HCT116 (cell line): ENCODE measurements at regions of chr3 and their contacts with region 1.

Region 1: GRCh38 chr3:185558395-185558794 is 6.0 kb upstream of the LIPH start:
- DNase-seq: peak; percentile 84
- ATAC-seq: peak; percentile 74
- H3K4me3 ChIP-seq: peak overlapping the region in 1 of 2 experiments; percentile 45; a peak in 3 of 4 replicates
- H3K27ac ChIP-seq: peak overlapping the region; percentile 56
- H3K4me1 ChIP-seq: peaks cover 24 to 45% of the 10 kb centered on the region in 2 experiments; a peak in 3 of 4 replicates
- H3K27me3 ChIP-seq: no peaks in the 10 kb centered on the region
- CTCF ChIP-seq: no peak
- POLR2A ChIP-seq: peak; percentile 32
- RAD21 ChIP-seq: no peak

Region 2: DNA sequence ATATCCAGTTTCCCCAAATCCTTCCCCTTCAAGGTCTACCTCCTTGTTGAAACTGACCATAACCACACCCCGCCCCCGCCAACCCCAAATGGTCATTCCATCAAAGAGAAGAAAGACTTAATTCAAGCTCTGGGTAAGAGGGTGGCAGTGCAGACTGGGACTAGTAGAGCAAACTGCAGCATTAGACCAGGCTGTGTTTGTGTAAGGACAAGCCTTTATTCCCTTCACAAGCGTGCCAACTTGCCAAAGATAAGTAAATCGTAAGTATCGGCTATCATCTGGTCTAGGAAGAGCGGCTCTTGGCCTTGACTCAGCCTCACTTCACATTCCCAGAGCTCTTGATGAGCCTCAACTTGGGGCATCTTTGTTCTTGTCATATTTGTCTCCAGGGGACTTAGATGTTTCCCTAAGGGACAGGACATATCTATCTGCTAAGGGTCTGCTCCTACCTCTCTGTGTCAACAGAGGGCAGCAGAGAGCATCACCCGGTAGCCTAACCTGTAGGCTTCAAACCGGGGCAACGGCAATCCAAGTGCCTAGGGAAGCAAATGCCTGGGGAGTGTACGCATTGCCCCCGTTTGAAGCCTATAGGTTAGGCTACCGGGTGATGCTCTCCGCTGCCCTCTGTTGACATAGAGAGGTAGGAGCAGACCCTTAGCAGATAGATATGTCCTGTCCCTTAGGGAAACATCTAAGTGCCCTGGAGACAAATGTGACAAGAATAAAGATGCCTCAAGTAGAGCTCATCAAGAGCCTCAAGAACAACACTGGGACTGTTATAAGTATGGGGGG is 204.4 kb before region 1 on chr3:
- CTCF ChIA-PET with region 1: no interaction called
- POLR2A ChIA-PET with region 1: no interaction called
- RAD21 ChIA-PET with region 1: no interaction called
- intact Hi-C with region 1: loop called (anchors 5 kb)
- DNase-seq: peak; percentile 92
- ATAC-seq: peak; percentile 99
- H3K4me3 ChIP-seq: no peak overlapping the region
- H3K27ac ChIP-seq: no peak overlapping the region
- H3K4me1 ChIP-seq: peaks cover 0 to 17% of the 10 kb centered on the region in 2 experiments; a peak in 2 of 4 replicates
- H3K27me3 ChIP-seq: no peaks in the 10 kb centered on the region
- CTCF ChIP-seq: peak; percentile 63 to 88 (median 68); a peak in 5 of 6 replicates
- POLR2A ChIP-seq: no peak
- RAD21 ChIP-seq: peak; percentile 60

Region 3: GRCh38 chr3:185460719-185461350 is 97.6 kb before region 1 on chr3:
- CTCF ChIA-PET with region 1: interaction called, 38 read pairs
- POLR2A ChIA-PET with region 1: interaction called, 13 read pairs
- RAD21 ChIA-PET with region 1: interaction called, 9 read pairs
- intact Hi-C with region 1: no loop called
- DNase-seq: peak; percentile 32
- ATAC-seq: peak; percentile 75
- H3K4me3 ChIP-seq: no peak overlapping the region
- H3K27ac ChIP-seq: no peak overlapping the region
- H3K4me1 ChIP-seq: no peaks in the 10 kb centered on the region
- H3K27me3 ChIP-seq: no peaks in the 10 kb centered on the region
- CTCF ChIP-seq: peak; percentile 46 to 86 (median 66); a peak in 5 of 6 replicates
- POLR2A ChIP-seq: no peak
- RAD21 ChIP-seq: peak; percentile 83

Region 4: DNA sequence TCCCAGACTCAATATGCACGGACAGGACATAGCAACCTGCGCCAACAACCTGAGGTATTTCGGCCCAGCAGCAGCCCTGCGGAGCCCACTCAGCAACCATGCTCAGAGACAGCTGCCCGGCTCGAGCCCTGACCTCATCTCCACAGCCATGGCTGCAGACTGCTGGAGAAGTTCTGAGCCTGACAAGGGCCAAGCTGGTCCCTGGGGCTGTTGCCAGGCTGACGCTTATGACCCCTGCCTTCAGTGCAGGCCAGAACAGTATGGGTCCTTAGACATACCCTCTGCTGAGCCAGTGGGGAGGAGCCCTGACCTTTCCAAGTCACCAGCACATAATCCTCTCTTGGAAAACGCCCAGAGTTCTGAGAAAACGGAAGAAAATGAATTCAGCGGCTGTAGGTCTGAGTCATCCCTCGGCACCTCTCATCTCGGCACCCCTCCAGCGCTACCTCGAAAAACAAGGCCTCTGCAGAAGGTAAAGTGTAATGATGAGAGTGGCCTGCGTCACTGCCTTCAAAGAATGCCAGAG is 85.0 kb before region 1 on chr3:
- CTCF ChIA-PET with region 1: interaction called, 3 read pairs
- POLR2A ChIA-PET with region 1: no interaction called
- RAD21 ChIA-PET with region 1: no interaction called
- intact Hi-C with region 1: loop called (anchors 5 kb)
- DNase-seq: peak; percentile 93
- ATAC-seq: peak; percentile 91
- H3K4me3 ChIP-seq: peak overlapping the region in 1 of 2 experiments; percentile 33; a peak in 1 of 4 replicates
- H3K27ac ChIP-seq: peak overlapping the region; percentile 56
- H3K4me1 ChIP-seq: peaks cover 42 to 57% of the 10 kb centered on the region in 2 experiments
- H3K27me3 ChIP-seq: no peaks in the 10 kb centered on the region
- CTCF ChIP-seq: no peak
- POLR2A ChIP-seq: no peak
- RAD21 ChIP-seq: peak; percentile 28; the same call in 1 of the 2 replicates

Region 5: GRCh38 chr3:185498503-185499396 is 59.6 kb before region 1 on chr3 and contains the start of gene TMEM41A:
- CTCF ChIA-PET with region 1: interaction called, 5 read pairs
- POLR2A ChIA-PET with region 1: no interaction called
- RAD21 ChIA-PET with region 1: no interaction called
- intact Hi-C with region 1: loop called (anchors 1 kb)
- DNase-seq: peak; percentile 73
- ATAC-seq: peak; percentile 97
- H3K4me3 ChIP-seq: peak within 1 kb of the TSS; percentile 92 to 95
- H3K27ac ChIP-seq: peak within 1 kb of the TSS; percentile 79
- H3K4me1 ChIP-seq: peaks cover 17 to 28% of the 10 kb centered on the region in 2 experiments
- H3K27me3 ChIP-seq: no peaks in the 10 kb centered on the region
- CTCF ChIP-seq: no peak
- POLR2A ChIP-seq: peak; percentile 67
- RAD21 ChIP-seq: peak; percentile 45; the same call in 1 of the 2 replicates
- total RNA-seq, gene TMEM41A: 25.4 TPM

Region 6: DNA sequence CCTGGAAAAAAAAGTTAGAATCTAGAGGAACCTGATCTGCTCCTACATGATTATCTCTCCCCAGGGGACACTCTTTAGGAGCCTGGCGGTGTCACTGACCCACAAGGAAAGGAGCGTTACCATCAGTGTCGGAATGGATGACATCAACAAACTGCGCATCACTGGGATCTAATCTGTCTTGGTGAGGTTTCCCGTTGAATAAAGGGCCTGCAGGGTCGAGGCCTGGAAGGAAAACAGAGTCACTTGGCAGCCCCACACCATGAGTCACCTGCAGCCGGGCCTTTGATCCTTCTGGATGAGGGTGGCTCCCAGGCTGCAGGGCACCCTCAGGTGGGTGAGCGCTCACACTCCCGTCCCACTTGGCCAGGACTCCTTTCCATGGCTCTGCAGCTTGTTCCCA is 31.0 kb before region 1 on chr3:
- CTCF ChIA-PET with region 1: interaction called, 13 read pairs
- POLR2A ChIA-PET with region 1: interaction called, 3 read pairs
- RAD21 ChIA-PET with region 1: interaction called in 1 of 2 experiments, 3 read pairs
- intact Hi-C with region 1: loop called (anchors 1 kb)
- DNase-seq: peak; percentile 81
- ATAC-seq: peak; percentile 90
- H3K4me3 ChIP-seq: peak overlapping the region; percentile 0 to 53; a peak in 3 of 4 replicates
- H3K27ac ChIP-seq: peak overlapping the region; percentile 59
- H3K4me1 ChIP-seq: peaks cover 23% of the 10 kb centered on the region in 2 experiments
- H3K27me3 ChIP-seq: no peaks in the 10 kb centered on the region
- CTCF ChIP-seq: no peak
- POLR2A ChIP-seq: no peak
- RAD21 ChIP-seq: peak; percentile 51; the same call in 1 of the 2 replicates

Region 7: DNA sequence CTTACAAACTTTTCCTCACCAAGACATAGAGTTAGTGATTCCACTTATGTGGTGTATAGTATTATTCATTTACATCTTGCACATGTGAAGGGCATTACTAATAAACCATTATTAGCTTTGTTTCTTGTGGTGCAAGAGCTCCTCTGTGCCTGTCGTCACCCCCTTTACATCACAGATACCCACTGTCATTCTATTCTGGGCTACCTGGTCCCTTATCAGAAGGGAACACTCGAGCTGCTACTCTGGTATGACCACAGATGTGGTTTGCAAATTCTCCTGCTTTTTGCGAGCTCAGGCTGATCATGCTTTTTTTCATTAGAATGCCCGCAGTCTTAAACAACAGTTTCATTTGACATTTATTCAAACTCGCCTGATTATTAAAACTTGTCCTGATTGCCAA is 13.8 kb after region 1 on chr3:
- CTCF ChIA-PET with region 1: interaction called, 31 read pairs
- POLR2A ChIA-PET with region 1: interaction called, 3 read pairs
- RAD21 ChIA-PET with region 1: interaction called in 1 of 2 experiments, 4 read pairs
- intact Hi-C with region 1: no loop called
- DNase-seq: no peak
- ATAC-seq: no peak
- H3K4me3 ChIP-seq: no peak overlapping the region
- H3K27ac ChIP-seq: no peak overlapping the region
- H3K4me1 ChIP-seq: peaks cover 2 to 8% of the 10 kb centered on the region in 2 experiments; a peak in 1 of 4 replicates
- H3K27me3 ChIP-seq: no peaks in the 10 kb centered on the region
- CTCF ChIP-seq: no peak
- POLR2A ChIP-seq: no peak
- RAD21 ChIP-seq: no peak

Region 8: GRCh38 chr3:185744997-185745843 is 186.8 kb after region 1 on chr3:
- CTCF ChIA-PET with region 1: no interaction called
- POLR2A ChIA-PET with region 1: no interaction called
- RAD21 ChIA-PET with region 1: no interaction called
- intact Hi-C with region 1: no loop called
- DNase-seq: no peak
- ATAC-seq: peak; percentile 47
- H3K4me3 ChIP-seq: no peak overlapping the region
- H3K27ac ChIP-seq: no peak overlapping the region
- H3K4me1 ChIP-seq: peaks cover 11 to 29% of the 10 kb centered on the region in 2 experiments
- H3K27me3 ChIP-seq: no peaks in the 10 kb centered on the region
- CTCF ChIP-seq: no peak
- POLR2A ChIP-seq: no peak
- RAD21 ChIP-seq: no peak